AG04450 (cell line): ENCODE measurements at regions of chr19 and their contacts with region 1.

Region 1: GRCh38 chr19:7562646-7563393 is 27.3 kb downstream of the PNPLA6 start:
- DNase-seq: no peak
- H3K4me3 ChIP-seq: no peak overlapping the region
- H3K27ac ChIP-seq: no peak overlapping the region
- H3K27me3 ChIP-seq: no peaks in the 10 kb centered on the region
- CTCF ChIP-seq: no peak

Region 2: DNA sequence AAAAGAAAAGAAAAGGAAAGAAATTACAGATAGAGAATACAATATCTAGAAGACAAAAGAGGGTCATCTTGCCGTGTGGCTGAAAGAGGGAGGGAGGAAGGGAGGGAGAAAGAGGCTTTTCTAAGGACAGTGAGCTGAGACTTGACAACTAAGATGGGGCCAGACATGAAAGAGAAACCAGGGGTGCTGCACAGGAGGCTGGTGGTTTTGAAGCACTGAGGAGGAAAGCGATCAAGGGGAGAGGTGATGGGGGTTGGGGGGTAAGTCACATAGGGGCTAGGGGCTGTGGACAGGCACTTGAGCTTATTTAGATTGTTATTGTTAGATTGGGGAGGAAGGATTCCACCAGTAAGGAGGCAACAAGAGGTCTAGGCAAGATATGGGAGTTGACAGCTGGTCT is 10.0 kb before region 1 on chr19:
- CTCF ChIA-PET with region 1: interaction called, 16 read pairs
- POLR2A ChIA-PET with region 1: no interaction called
- DNase-seq: no peak
- H3K4me3 ChIP-seq: no peak overlapping the region
- H3K27ac ChIP-seq: no peak overlapping the region
- H3K27me3 ChIP-seq: no peaks in the 10 kb centered on the region
- CTCF ChIP-seq: no peak

Region 3: DNA sequence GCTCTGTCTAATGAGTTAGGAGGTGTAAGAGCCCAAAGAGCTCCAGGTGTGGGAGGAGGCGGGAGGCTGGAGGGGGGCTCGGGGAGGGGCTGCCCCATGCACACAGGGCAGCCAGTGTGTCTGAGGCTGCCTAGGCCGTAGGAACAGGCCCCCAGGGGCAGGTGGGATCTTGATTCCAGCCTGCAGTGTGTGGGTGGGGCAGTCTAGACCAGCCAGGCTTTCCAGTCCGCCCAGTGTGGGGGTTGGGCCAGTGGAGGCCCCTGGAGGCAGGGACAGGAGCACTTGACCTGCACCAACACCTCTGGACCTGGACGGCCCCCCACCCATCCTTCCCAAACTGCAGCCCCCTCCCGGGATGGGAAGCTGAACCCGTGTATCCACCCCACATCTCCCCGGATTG is 27.4 kb after region 1 on chr19:
- CTCF ChIA-PET with region 1: interaction called, 19 read pairs
- POLR2A ChIA-PET with region 1: no interaction called
- DNase-seq: no peak
- H3K4me3 ChIP-seq: no peak overlapping the region
- H3K27ac ChIP-seq: no peak overlapping the region
- H3K27me3 ChIP-seq: peaks cover 14% of the 10 kb centered on the region
- CTCF ChIP-seq: no peak

Region 4: DNA sequence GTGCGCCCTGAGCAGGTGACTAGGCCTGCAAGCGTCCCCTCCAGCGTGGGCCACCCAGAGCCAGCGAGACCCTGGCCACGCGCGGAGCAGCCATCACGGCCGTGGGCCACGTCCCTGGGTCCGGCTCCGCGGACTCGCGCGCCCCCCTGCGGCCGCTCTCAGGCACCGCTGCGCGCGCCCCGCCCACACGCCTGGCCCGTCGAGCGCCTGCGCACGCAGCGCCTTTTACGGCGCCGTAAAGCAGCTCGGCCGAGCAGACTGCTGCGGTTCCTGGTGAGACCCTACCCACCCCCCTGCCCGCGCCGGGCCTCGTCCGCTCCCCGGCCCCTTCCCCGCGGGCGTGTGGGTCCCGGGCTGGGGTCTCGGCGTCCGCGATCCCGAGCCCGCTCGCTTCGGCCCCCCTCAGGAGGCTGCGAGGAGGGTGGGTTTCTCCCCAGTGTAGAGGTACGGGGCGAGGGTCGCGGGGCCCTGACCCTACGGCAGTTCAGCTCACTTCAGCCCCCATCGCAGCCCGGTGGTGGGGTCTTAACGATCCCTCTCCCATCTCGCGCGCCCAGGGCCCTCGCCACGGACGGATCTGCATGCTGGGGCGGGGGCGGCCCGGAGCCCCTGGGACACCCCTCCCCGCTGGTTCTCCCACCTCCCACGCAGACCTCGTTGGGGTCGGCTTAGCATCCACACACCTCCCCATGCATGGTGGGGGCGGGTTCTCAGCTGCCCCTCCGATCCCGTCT is 118.0 kb after region 1 on chr19 and contains the start of gene TRAPPC5:
- CTCF ChIA-PET with region 1: interaction called, 80 read pairs
- POLR2A ChIA-PET with region 1: no interaction called
- DNase-seq: peak; percentile 39
- H3K4me3 ChIP-seq: peak within 1 kb of the TSS; percentile 92
- H3K27ac ChIP-seq: peak within 1 kb of the TSS; percentile 39
- H3K27me3 ChIP-seq: peaks cover 3% of the 10 kb centered on the region
- CTCF ChIP-seq: peak; percentile 64
- polyA plus RNA-seq, gene TRAPPC5: 42.1 and 69.8 TPM in 2 replicates

Region 5: DNA sequence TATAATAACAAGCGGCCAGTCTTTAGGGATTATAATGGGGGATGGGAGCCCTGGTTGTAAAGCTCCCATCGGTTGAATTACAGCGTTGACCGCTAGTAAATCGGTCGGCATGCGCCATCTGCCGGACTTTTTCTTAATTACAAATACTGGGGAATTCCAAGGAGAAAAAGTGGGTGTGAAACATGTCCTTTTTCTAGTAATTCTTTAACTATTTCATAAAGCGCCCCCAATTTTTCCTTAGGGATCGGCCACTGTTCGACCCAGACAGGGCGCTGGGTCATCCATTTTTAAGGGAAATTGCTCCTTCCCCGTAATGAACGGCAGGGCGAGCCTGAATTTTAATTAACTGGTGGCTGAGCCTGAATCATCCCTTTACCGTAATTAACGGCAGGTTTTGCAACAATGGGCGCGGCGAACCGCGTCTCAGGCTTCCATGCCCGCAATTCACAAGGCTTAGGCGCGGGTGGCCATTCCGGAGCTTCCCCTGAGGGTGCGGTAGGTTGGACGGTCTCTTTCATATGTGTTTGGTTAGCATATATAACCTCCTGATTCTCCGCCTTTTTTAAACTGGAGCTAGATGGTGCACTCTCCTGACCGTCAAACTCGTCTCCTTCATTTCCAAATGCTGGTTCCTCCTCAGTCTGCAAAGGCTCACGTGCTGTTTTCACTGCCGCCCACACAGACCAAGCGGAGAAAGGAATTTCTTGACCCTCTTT is 237.0 kb after region 1 on chr19:
- CTCF ChIA-PET with region 1: interaction called, 191 read pairs
- POLR2A ChIA-PET with region 1: no interaction called
- DNase-seq: peak; percentile 55
- H3K4me3 ChIP-seq: peak overlapping the region; percentile 51
- H3K27ac ChIP-seq: no peak overlapping the region
- H3K27me3 ChIP-seq: peaks cover 2% of the 10 kb centered on the region
- CTCF ChIP-seq: peak; percentile 62

Region 6: DNA sequence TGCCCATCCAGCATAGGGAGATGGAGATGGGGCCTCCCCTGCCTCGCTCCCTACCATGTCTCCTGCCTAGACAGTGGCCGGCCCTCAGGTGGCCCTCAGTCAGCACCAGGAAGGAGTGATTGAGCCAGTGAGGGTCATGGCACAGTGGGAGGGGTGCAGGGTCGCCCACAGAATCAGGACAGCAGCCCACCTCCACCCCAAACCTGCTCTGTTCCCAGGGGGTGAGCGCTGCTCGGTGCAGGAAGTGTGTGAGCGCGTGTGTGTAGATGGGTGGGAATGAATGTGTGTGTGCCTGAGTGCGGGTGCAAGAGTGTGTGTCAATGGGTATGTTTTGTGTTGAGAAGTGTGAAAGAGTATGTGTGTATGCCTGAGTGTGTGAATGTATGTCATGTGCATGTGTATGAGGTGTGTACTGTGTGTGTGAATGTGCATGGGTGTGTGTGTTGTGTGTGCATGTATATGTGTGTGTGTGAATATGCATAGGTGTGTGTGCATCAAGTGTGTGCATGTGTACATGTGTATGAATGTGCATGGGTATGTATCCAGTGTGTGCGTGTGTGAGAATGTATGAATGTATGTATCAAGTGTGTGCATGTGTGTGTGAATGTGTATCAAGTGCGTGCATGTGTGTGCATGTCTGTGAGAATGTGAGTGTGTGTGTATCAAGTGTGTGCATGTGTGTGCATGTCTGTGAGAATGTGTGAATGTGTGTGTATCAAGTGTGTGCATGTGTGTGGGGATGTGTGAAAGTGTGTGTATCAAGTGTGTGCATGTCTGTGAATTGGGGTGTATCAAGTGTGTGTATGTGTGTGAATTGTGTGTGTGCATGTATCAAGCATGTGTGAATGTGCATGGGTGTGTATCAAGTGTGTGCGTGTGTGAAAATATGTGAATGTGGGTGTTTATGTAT is 279.2 kb after region 1 on chr19:
- CTCF ChIA-PET with region 1: no interaction called
- POLR2A ChIA-PET with region 1: no interaction called
- DNase-seq: no peak
- H3K4me3 ChIP-seq: no peak overlapping the region
- H3K27ac ChIP-seq: no peak overlapping the region
- H3K27me3 ChIP-seq: no peaks in the 10 kb centered on the region
- CTCF ChIP-seq: no peak